ENCODE measurements at regions of chr20 and their contacts with region 1.

Region 1: DNA sequence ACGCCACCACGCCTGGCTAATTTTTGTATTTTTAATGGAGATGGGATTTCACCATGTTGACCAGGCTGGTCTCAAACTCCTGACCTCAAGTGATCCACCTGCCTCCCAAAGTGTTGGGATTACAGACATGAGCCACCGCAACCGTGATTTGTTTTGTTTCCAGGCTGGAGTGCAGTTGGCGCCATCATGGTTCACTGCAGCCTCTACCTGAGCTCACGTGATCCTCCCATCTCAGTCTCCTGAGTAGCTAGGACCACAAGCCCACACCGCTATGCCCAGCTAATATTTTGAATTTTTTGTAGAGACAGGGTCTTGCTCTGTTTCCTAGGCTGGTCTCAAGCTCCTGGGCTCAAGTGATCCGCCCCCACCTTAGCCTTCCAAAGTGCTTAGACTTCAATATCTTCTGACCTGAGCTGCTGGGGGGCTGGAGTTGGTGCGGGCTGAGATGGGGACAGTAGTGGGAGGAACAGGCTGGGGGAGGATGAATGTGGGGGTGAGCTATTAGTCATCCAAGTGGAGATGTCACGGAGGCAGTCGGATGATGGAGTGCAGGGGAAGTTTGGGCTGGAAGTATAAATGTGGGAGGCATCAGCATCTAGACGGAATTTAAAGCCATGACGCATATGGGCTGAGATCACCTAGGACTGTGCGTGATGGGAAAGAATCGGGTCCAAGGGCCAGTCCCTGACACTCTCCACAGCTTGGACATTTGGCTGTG is 23.1 kb upstream of the ZMYND8 start:
- DNase-seq: no peak
- H3K4me3 ChIP-seq: no peak overlapping the region
- H3K27ac ChIP-seq: peak overlapping the region in 1 of 2 experiments; percentile 69; a peak in 2 of 4 replicates
- H3K4me1 ChIP-seq: peaks cover 3 to 15% of the 10 kb centered on the region in 2 experiments; a peak in 3 of 4 replicates
- H3K27me3 ChIP-seq: no peaks in the 10 kb centered on the region
- CTCF ChIP-seq: no peak
- EP300 ChIP-seq: peak in 1 of 2 experiments; percentile 88; a peak in 2 of 4 replicates
- RAD21 ChIP-seq: no peak

Region 2: GRCh38 chr20:47187450-47188190 is 192.0 kb before region 1 on chr20:
- CTCF ChIA-PET with region 1: interaction called, 323 read pairs
- POLR2A ChIA-PET with region 1: no interaction called
- DNase-seq: no peak
- H3K4me3 ChIP-seq: no peak overlapping the region
- H3K27ac ChIP-seq: no peak overlapping the region
- H3K4me1 ChIP-seq: peaks cover 0 to 5% of the 10 kb centered on the region in 2 experiments; a peak in 1 of 4 replicates
- H3K27me3 ChIP-seq: no peaks in the 10 kb centered on the region
- CTCF ChIP-seq: no peak
- EP300 ChIP-seq: no peak
- RAD21 ChIP-seq: no peak

Region 3: GRCh38 chr20:47241345-47241781 is 138.2 kb before region 1 on chr20:
- CTCF ChIA-PET with region 1: interaction called, 31 read pairs
- POLR2A ChIA-PET with region 1: no interaction called
- DNase-seq: no peak
- H3K4me3 ChIP-seq: no peak overlapping the region
- H3K27ac ChIP-seq: peak overlapping the region in 1 of 2 experiments; percentile 36; a peak in 1 of 4 replicates
- H3K4me1 ChIP-seq: peaks cover 0 to 14% of the 10 kb centered on the region in 2 experiments; a peak in 2 of 4 replicates
- H3K27me3 ChIP-seq: no peaks in the 10 kb centered on the region
- CTCF ChIP-seq: no peak
- EP300 ChIP-seq: no peak
- RAD21 ChIP-seq: no peak

Region 4: DNA sequence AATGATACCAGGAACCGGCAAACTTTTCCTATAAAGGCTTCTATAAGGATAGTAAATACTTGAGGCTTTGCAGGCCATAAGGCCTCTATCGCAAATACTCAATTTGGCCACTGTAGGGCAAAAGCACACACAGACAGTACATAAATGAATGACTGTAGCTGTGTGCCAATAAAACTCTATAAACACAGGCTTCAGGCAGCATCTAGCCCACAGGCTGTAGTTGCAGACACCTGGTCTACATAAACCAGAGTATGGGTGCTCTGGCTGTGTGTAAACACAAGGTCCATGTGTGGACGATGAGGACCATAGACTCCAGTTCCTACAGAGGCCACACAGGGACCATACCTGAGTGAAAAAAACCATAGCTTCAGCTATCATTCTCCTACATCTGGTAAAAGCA is 75.3 kb before region 1 on chr20:
- CTCF ChIA-PET with region 1: interaction called, 62 read pairs
- POLR2A ChIA-PET with region 1: no interaction called
- DNase-seq: peak; percentile 57
- H3K4me3 ChIP-seq: no peak overlapping the region
- H3K27ac ChIP-seq: peak overlapping the region; percentile 8 to 78; a peak in 3 of 4 replicates
- H3K4me1 ChIP-seq: peaks cover 4 to 21% of the 10 kb centered on the region in 2 experiments; a peak in 3 of 4 replicates
- H3K27me3 ChIP-seq: no peaks in the 10 kb centered on the region
- CTCF ChIP-seq: peak; percentile 33
- EP300 ChIP-seq: peak in 1 of 2 experiments; percentile 63; a peak in 2 of 4 replicates
- RAD21 ChIP-seq: peak; percentile 48

Region 5: DNA sequence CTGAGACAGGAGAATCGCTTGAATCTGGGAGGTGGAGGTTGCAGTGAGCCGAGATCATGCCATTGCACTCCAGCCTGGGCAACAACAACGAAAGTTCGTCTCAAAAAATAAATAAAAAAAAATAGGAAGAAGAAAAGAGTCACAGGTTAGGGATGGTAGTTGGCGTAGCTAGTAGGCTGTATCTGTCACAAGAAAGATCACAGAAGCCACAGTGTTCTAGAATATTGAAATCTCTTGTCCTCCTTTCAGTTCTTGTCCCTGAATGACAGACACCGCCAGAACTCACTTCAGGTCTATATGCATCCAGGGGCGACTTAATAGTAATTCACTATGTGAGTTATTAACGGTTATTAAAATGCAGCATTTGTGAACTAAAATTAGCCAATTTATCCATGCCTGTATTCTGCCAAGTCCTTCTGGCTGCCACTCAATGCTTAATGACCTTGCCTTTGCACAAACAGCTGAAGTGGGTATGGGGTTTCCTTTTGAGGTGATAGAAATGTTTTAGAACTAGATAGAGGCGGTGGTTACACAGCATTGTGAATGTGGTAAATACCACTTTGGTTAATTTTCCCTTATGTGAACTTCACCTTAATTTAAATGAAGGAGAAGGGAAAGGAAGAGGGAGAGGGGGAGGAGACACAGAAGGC is 18.2 kb after region 1 on chr20:
- CTCF ChIA-PET with region 1: interaction called, 31 read pairs
- POLR2A ChIA-PET with region 1: no interaction called
- DNase-seq: no peak
- H3K4me3 ChIP-seq: no peak overlapping the region
- H3K27ac ChIP-seq: no peak overlapping the region
- H3K4me1 ChIP-seq: no peaks in the 10 kb centered on the region
- H3K27me3 ChIP-seq: no peaks in the 10 kb centered on the region
- CTCF ChIP-seq: no peak
- EP300 ChIP-seq: no peak
- RAD21 ChIP-seq: no peak

Region 6: DNA sequence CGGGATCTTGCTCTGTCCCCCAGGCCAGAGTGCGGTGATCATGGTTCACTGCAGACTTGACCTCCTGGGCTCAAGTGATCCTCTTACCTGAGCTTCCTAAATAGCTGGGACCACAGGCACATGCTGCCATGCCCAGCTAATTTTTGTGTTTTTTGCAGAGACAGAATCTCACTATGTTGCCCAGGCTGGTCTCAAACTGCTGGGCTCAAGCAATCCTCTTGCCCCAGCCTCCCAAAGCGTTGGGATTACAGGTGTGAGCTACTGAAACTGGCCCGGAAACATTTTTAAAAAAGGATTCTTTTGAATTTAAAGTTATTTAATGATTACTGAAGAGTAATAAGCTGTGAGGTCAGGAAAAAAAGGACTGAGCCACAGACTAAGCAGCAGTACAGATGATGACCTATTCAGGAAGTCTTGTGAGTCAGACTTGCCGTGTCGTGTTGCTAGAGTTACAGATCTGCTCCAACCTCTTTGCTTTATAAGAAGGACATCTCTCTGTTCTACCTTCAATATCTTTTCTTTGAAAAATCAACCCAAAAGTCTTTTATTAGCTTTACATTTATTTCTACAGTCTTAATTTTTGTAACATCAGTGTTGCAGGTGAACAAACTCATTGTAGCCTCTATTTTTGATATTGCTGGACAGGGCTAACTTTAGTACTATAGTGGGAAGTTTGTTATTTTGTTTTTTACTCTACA is 230.8 kb after region 1 on chr20:
- CTCF ChIA-PET with region 1: interaction called, 32 read pairs
- POLR2A ChIA-PET with region 1: no interaction called
- DNase-seq: no peak
- H3K4me3 ChIP-seq: no peak overlapping the region
- H3K27ac ChIP-seq: peak overlapping the region in 1 of 2 experiments; percentile 83; a peak in 2 of 4 replicates
- H3K4me1 ChIP-seq: peaks cover 0 to 23% of the 10 kb centered on the region in 2 experiments; a peak in 1 of 4 replicates
- H3K27me3 ChIP-seq: no peaks in the 10 kb centered on the region
- CTCF ChIP-seq: no peak
- EP300 ChIP-seq: no peak
- RAD21 ChIP-seq: no peak

Measured in SK-N-SH (cell line).